Aorta (tissue), 5 donors: ENCODE measurements at regions of chr7 and their contacts with region 1.

Region 1: DNA sequence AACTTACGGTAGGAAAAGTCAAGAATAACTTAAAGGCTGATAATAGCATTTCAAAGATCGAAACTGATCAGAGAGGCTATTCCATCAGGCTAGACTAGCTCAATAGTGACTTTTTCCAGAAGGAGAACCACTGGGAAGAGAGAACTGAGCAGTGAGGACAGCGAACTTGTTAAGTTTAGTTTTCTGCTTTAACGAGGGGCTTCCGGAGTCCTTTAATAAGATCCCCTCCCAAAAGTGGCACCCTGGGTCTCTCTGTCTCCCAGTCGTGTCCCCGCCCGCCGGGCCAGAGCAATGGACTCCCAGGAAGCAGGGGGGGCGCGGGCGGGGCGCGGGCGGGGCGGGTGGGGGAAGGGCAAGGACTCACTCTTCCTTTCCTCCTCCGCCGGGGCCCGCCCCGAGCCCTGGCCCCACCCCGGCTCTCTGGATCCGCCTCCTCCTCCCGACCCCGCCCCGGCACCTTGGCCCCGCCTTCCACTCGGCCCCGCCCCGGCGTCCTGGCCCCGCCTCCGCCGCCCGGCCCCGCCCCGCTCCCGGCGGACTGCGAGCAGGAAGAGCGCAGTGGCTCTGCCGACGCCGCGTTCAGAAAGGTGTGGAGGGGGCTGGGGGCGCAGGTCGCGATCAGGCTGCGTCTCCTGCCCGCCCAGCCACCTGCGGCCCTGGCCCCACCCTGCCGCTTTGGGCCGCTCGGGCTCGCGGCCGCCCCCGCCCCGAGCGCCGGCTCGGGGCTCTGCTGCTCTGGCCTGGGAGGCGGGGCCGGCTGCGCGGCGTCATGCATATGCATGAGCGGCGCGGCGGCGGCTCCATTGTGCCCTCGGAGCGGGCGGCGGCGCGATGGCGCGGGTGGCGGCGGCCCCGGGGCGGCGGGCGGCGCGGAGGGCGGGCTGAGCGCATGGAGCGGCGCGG is at the start of gene ZMIZ2:
- DNase-seq: peak; percentile 95 to 97
- ATAC-seq: peak; percentile 98
- H3K4me3 ChIP-seq: peak within 1 kb of the TSS; percentile 90 to 97
- H3K27ac ChIP-seq: peak within 1 kb of the TSS; percentile 92 to 98
- H3K4me1 ChIP-seq: no peaks in the 10 kb centered on the region
- H3K27me3 ChIP-seq: no peaks in the 10 kb centered on the region
- total RNA-seq, gene ZMIZ2: 64.5 to 96.6 TPM

Region 2: GRCh38 chr7:44490351-44491200 is 257.7 kb before region 1 on chr7 and contains the start of gene NUDCD3:
- intact Hi-C with region 1: no loop called
- DNase-seq: peak; percentile 87 to 93
- ATAC-seq: peak; percentile 97
- H3K4me3 ChIP-seq: peak within 1 kb of the TSS; percentile 87 to 95
- H3K27ac ChIP-seq: peak within 1 kb of the TSS; percentile 97 to 98
- H3K4me1 ChIP-seq: peaks cover 2 to 11% of the 10 kb centered on the region in 2 donors
- H3K27me3 ChIP-seq: no peaks in the 10 kb centered on the region
- total RNA-seq, gene NUDCD3: 82.4 to 111 TPM

Region 3: GRCh38 chr7:44606450-44607254 is 141.6 kb before region 1 on chr7 and contains the start of gene OGDH:
- intact Hi-C with region 1: loop called in 1 of 2 experiments (anchors 5 kb)
- DNase-seq: peak; percentile 100
- ATAC-seq: peak; percentile 100
- H3K4me3 ChIP-seq: peak within 1 kb of the TSS; percentile 61 to 62
- H3K27ac ChIP-seq: peak within 1 kb of the TSS; percentile 46 to 91
- H3K4me1 ChIP-seq: no peaks in the 10 kb centered on the region
- H3K27me3 ChIP-seq: no peaks in the 10 kb centered on the region
- total RNA-seq, gene OGDH: 84.7 to 95.3 TPM

Region 4: DNA sequence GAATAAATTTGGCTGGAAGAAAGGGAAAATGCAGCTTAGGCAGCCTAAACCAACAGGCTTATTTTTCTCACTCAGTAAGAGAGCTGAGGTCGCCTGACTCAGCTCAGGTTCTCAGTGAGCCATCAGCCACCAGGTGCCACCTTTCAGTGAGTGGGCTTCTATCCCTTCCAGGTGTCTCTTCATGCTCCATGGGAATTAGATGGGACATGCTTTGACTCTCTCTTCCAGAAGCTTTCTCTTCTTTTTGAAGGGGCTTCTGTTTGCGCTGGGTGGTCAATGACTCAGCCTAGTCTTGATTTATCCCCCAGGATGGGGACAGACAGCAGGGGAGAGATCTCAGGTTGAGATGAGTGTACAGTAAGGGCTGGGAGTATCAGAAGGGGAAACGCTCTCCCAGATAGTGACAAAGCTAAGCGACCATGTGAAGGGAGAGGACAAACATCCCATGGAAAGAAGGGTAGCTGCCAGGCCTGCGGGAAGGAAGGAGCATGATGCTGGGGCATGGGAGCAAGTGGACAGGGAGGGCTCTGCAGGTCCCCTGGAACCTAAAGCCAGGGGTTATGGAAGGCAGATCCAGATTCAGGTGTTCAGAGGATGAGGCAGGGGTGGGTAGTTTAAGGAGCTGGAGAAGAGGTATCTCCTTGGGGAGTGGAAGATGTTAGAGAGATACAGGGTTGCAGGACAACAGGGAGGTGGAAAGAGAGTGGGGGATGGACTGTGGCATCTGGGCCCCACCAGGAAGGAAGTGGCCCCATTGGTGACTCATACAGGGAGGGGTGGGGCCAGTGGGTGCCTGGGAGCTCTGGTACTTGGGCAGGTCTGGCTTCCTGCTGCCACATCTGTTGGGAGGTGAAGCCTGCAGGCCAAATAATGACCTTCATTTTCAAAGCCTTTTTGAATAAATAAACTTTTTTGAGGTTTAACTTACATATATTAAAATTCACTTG is 109.4 kb before region 1 on chr7:
- intact Hi-C with region 1: loop called in 1 of 2 experiments (anchors 10 kb)
- DNase-seq: peak; percentile 86 to 87
- ATAC-seq: peak; percentile 78
- H3K4me3 ChIP-seq: no peak overlapping the region
- H3K27ac ChIP-seq: peak overlapping the region; percentile 73 to 93
- H3K4me1 ChIP-seq: peaks cover 2 to 5% of the 10 kb centered on the region in 2 donors
- H3K27me3 ChIP-seq: no peaks in the 10 kb centered on the region

Region 5: DNA sequence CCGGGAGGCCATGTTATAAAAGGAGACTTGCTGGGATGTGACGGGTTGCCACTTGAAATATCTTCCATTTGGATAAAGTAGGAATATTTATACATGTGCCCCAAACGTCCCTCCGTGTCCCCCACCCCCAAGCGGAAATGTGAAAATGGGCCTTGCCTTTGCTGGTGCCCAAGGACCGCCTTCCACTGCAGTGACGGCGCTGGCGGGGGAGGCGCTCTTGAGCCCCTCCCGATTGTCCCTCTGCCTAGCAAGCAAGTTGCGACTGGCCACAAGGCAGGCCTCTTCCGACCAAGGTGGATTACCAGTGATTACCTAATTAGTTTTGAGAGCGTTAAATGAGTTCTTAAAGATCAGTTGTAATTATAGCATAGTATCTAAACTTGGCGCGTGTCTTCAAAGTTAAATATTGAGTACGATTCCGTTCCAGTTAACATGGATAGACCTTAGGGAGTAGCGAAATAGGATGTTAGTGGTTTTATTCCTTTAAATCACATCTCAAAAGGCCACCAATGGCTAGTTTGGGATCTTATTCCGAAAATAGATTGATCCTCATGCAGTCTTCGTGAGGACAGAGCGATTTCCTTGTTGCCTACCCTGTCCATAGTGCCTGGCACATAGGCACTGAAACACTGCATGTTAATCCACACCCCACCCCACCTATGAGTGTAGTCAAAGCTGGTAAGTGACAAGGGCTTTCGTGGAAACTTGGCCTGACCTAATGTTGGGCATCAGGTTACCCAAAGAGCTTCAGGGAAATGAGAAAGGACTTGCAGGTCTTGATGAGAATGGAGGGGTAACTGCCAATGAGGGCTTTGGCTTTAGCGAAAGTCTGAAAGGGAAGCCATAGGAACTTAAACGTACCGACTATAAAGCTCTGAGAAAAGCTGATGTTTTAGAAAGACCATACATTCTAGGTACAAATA is 49.3 kb after region 1 on chr7:
- intact Hi-C with region 1: loop called (anchors 2 to 5 kb)
- DNase-seq: peak; percentile 94 to 95
- ATAC-seq: peak; percentile 92
- H3K4me3 ChIP-seq: peak overlapping the region; percentile 61 to 74
- H3K27ac ChIP-seq: peak overlapping the region; percentile 84 to 93
- H3K4me1 ChIP-seq: peaks cover 0 to 4% of the 10 kb centered on the region in 2 donors
- H3K27me3 ChIP-seq: no peaks in the 10 kb centered on the region